Heart right ventricle (tissue), 16 donors: ENCODE measurements at regions of chr13 and their contacts with region 1.

Region 1: DNA sequence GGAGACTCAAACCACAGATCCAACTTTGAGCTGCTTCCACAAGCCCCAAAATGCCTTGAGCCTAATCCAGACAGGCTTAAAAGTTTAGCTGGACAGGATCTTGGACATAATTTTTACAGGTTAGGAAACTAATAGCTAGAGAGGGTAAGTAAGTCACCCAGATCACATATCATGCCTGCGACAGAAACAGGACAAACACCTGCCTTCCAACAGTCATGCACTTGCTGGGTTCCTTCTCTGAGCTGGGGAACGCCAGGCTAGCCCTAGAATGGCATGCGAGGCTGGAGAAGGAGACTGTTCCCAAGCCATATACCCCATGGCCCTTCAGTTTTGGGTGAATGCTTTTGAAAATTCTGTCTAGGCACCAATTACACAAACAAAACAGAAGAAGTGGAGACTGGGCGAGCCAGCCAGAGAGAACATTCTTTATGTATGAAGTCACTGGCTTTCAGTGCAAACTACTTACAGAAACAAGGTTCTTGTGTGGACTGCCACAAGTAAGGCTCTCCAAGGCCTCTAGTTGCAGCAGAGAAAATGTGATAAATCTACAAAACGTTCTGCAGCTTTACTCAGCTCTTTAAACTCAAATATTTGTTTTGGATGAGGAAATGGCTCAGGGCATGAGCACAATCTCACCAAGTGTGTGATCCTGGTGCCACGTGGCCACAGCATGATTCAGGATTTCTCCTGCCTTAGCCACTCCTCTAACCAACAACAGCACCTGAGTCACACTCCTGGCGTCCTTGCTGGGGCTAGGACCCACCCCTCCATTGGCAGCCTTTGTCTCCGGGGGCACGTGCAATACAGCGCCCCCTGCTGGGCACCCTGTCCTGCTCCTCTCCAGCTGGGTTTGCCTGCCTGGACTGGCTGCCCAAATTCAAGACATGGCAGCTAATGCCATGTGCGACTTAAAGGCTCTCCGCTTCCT is 73.4 kb upstream of the UBL3 start:
- DNase-seq: peak; percentile 34 to 42
- ATAC-seq: peak; percentile 52 to 85 (median 80)
- H3K4me3 ChIP-seq: no peak overlapping the region
- H3K27ac ChIP-seq: peak overlapping the region in 9 of 10 donors; percentile 9 to 72 (median 34)
- H3K4me1 ChIP-seq: peaks cover 12 to 38% (median 26%) of the 10 kb centered on the region in 9 donors
- H3K27me3 ChIP-seq: no peaks in the 10 kb centered on the region
- CTCF ChIP-seq: peak; percentile 40 to 87 (median 75)

Region 2: GRCh38 chr13:29513397-29514322 is 410.2 kb before region 1 on chr13:
- intact Hi-C with region 1: loop called in 2 of 10 experiments (anchors 10 kb)
- DNase-seq: no peak
- ATAC-seq: peak in 5 of 8 donors; percentile 36 to 59 (median 56)
- H3K4me3 ChIP-seq: no peak overlapping the region
- H3K27ac ChIP-seq: peak overlapping the region in 2 of 10 donors; percentile 15 to 16
- H3K4me1 ChIP-seq: peaks cover 2 to 17% (median 7%) of the 10 kb centered on the region in 9 donors
- H3K27me3 ChIP-seq: no peaks in the 10 kb centered on the region
- CTCF ChIP-seq: no peak

Region 3: DNA sequence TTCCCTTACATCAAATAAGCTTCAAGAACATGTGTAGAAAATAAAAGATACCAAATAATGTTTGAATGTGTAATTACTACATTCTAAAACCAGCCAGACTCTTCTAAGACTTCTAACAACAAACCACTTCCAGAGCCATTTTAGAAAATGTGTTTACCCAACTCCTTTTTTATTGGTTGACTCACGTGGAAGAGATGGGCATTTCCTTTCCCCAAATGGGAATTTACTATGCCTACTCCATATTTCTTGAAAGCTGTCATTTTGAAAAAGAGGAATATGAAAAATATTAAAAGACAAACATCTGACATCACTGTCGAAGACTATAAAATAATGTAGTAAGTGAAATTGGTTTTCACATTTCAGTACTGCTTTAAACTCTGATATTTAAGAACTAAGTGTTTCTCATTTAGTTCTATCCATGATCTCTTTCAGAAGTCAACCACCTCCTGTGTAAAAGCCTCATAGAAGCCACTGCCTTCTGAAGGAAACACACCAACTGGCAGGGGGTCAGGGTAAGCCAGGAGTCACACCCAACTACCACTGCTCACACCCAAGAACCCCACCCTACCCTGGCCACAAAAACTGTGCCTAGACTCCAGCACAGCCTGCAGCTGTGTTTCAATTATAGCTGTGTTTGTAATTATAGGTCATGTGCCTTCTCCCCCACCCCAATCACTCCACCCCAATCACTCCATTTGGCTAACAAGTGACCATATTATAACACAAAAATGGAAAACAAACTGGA is 160.2 kb before region 1 on chr13:
- intact Hi-C with region 1: loop called in 1 of 10 experiments (anchors 10 kb)
- DNase-seq: no peak
- ATAC-seq: no peak
- H3K4me3 ChIP-seq: no peak overlapping the region
- H3K27ac ChIP-seq: no peak overlapping the region
- H3K4me1 ChIP-seq: peaks cover 0 to 6% (median 0%) of the 10 kb centered on the region in 9 donors
- H3K27me3 ChIP-seq: no peaks in the 10 kb centered on the region
- CTCF ChIP-seq: no peak

Region 4: GRCh38 chr13:29771247-29771646 is 152.6 kb before region 1 on chr13:
- intact Hi-C with region 1: loop called in 4 of 10 experiments (anchors 5 to 10 kb)
- DNase-seq: no peak
- ATAC-seq: no peak
- H3K4me3 ChIP-seq: no peak overlapping the region
- H3K27ac ChIP-seq: no peak overlapping the region
- H3K4me1 ChIP-seq: no peaks in the 10 kb centered on the region
- H3K27me3 ChIP-seq: no peaks in the 10 kb centered on the region
- CTCF ChIP-seq: peak; percentile 17 to 70 (median 59)

Region 5: DNA sequence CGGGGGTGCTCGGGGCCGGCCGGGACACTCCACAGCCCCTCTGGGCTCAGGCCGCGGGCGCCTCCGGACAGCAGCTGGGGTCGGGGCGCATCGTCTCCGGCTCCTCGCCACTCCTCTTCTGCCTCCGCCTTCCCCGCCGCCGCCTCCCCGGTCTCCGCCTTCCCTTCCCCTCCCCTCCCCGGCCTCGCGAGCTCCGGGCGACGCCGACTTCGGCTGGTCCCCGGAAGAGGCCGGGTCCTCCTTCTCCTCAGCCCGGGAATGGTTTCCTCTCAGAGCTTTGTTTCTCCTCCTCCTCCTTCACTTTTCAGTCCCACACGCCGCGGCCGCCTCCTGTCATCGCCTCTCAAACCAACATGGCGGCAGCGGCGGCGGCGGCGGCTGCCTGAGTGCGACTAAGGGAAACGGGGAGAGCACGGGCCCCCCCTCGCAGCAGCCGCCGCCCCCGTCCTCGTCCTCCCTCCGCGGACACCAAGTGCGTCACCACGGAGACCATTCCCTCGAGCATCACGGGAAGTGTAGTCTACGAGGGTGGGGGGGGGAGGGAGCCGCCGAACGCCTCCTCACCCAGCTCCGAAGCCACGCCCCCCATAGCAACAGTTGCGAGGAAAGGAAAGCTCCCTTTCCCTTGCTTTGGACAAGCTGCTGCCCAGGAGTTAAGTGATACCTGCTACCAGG is 73.5 kb before region 1 on chr13 and contains the start of gene UBL3:
- intact Hi-C with region 1: loop called in 3 of 10 experiments (anchors 5 kb)
- DNase-seq: peak; percentile 96 to 97
- ATAC-seq: peak; percentile 95 to 99 (median 98)
- H3K4me3 ChIP-seq: peak within 1 kb of the TSS; percentile 62 to 98 (median 92)
- H3K27ac ChIP-seq: peak within 1 kb of the TSS; percentile 94 to 99 (median 98)
- H3K4me1 ChIP-seq: peaks cover 0 to 40% (median 19%) of the 10 kb centered on the region in 9 donors
- H3K27me3 ChIP-seq: no peaks in the 10 kb centered on the region
- CTCF ChIP-seq: no peak
- total RNA-seq, gene UBL3: 18.3 to 24.3 (median 21.0) TPM

Region 6: GRCh38 chr13:30061217-30061616 is 137.4 kb after region 1 on chr13:
- intact Hi-C with region 1: no loop called
- DNase-seq: no peak
- ATAC-seq: no peak
- H3K4me3 ChIP-seq: no peak overlapping the region
- H3K27ac ChIP-seq: no peak overlapping the region
- H3K4me1 ChIP-seq: no peaks in the 10 kb centered on the region
- H3K27me3 ChIP-seq: peaks cover 0 to 16% (median 4%) of the 10 kb centered on the region in 7 donors
- CTCF ChIP-seq: no peak